ENCODE measurements at regions of chr2 and their contacts with region 1.

Region 1: GRCh38 chr2:60550178-60550983 is 3.1 kb downstream of the BCL11A start:
- DNase-seq: peak; percentile 81
- H3K4me3 ChIP-seq: peak overlapping the region; percentile 81 to 89 (median 83)
- H3K27ac ChIP-seq: peak overlapping the region; percentile 16
- H3K4me1 ChIP-seq: peaks cover 27% of the 10 kb centered on the region
- H3K27me3 ChIP-seq: peaks cover 4% of the 10 kb centered on the region
- CTCF ChIP-seq: peak; percentile 65 to 86

Region 2: DNA sequence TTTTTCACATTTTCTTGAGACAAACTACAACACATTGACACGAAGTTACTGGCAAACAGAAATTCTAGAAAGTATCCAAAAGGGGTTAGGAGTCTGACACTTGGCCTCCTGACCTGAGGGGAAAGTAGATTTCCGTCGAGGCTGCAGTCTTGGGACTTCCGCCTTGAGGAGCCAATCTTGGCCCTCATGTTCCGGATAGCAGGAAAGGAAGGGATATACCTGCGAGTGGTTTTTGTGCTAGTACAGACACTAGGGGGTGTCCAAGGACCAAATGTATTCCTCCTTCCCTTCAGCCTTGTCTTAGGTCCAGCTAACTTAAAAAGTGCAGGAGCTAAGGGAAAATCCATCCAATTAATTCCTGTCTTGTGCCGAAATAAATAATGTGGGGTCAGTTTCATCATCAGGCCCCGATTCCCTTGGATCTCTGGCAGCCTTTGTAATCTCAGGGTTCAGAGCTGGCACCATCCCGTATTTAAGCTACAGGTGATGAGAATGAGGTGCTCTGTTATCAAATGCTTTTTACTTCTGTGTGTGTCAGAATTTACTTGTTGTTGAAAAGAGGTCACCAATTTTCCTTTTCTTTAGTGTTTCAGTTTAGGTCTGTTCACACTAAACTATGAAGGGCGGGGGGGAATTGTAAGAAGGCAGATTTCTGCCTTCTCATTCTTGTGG is 1979.1 kb before region 1 on chr2:
- CTCF ChIA-PET with region 1: interaction called, 3 read pairs
- dilution Hi-C with region 1: no loop called
- in situ Hi-C with region 1: no loop called
- intact Hi-C with region 1: loop called (anchors 2 kb)
- DNase-seq: peak; percentile 69
- H3K4me3 ChIP-seq: no peak overlapping the region
- H3K27ac ChIP-seq: no peak overlapping the region
- H3K4me1 ChIP-seq: peaks cover 5% of the 10 kb centered on the region
- H3K27me3 ChIP-seq: no peaks in the 10 kb centered on the region
- CTCF ChIP-seq: peak; percentile 82 to 88

Region 3: GRCh38 chr2:58762176-58762781 is 1788.1 kb before region 1 on chr2:
- CTCF ChIA-PET with region 1: no interaction called
- dilution Hi-C with region 1: no loop called
- in situ Hi-C with region 1: no loop called
- intact Hi-C with region 1: loop called (anchors 1 kb)
- DNase-seq: peak; percentile 65
- H3K4me3 ChIP-seq: no peak overlapping the region
- H3K27ac ChIP-seq: no peak overlapping the region
- H3K4me1 ChIP-seq: no peaks in the 10 kb centered on the region
- H3K27me3 ChIP-seq: peaks cover under 1% of the 10 kb centered on the region
- CTCF ChIP-seq: peak; percentile 69 to 83

Region 4: DNA sequence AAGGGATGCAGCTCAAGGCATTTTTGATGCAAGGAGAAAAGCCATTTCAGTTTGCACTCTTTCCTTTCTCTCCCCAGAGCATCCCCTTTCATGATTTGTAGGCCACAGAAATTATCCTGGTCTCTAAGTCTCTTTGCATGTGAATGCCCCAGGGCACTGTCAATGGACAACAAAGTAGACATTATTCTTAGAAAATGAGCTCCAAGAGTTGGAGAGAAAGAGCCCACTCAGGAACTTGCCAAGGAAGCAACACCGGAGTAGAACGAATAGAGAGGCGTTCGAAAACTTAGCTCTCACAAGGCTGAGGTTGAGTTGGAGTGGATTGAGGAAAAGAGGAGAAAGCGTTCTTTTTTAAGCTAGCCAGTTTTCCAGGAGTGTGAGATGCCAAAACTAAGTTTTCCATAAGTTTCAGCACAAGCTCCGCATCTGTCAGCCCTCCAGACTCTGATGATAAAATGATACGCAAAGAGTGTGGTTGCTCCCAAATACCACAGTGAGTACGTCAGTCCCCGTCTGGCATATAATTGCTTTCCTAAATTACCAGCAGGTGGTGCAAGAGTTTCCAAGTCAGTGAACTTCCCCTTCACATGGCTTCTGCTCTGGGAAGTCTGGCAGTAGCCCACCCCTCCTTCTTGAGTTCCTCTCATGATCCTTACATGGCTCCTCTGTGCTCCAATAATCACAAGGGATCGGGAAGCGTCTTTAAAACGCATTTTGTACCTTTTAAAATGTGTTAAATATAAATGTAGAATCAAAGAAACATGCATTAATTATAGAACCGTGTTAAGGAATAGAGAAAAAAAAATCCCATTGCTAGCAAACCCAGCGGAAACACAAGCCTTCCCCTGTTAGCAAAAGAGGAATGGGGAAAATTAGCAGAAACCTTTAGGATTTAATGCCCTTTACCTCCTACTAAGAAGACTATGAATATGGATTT is 1248.6 kb before region 1 on chr2:
- CTCF ChIA-PET with region 1: no interaction called
- dilution Hi-C with region 1: no loop called
- in situ Hi-C with region 1: loop called in 1 of 2 experiments (anchors 25 kb)
- intact Hi-C with region 1: loop called (anchors 1 kb)
- DNase-seq: peak; percentile 62
- H3K4me3 ChIP-seq: no peak overlapping the region
- H3K27ac ChIP-seq: no peak overlapping the region
- H3K4me1 ChIP-seq: no peaks in the 10 kb centered on the region
- H3K27me3 ChIP-seq: no peaks in the 10 kb centered on the region
- CTCF ChIP-seq: peak; percentile 60 to 69

Region 5: DNA sequence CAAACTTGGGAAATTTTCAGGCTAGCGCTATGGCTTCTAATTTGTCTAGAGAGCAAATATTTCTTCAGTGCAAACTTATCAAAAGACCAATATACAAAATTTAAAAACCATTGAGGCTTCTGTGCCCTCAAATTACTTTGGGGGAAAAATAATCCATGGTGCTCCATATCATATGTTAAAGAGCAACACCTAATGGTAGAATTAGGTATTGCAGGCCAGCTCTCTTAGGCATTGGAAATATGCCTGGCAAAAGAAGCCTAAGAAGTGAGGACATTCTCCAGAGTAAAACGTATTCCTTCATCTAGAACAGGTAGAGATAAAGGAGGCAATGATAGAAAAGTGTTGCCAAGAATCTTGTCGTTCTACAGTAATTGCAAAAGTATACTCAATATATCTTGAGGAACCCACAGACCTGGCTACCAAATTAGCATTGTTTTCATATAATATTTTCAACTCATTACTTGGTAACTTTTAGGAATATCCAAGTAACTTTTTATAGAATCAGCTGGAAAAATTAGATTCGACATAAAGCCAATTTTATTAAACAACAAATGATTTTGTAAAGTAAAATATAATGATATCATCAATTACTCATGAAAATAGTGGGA is 398.1 kb before region 1 on chr2:
- CTCF ChIA-PET with region 1: interaction called, 8 read pairs
- dilution Hi-C with region 1: no loop called
- in situ Hi-C with region 1: no loop called
- intact Hi-C with region 1: loop called (anchors 1 kb)
- DNase-seq: peak; percentile 21
- H3K4me3 ChIP-seq: no peak overlapping the region
- H3K27ac ChIP-seq: no peak overlapping the region
- H3K4me1 ChIP-seq: no peaks in the 10 kb centered on the region
- H3K27me3 ChIP-seq: peaks cover 4% of the 10 kb centered on the region
- CTCF ChIP-seq: peak; percentile 85 to 92

Region 6: DNA sequence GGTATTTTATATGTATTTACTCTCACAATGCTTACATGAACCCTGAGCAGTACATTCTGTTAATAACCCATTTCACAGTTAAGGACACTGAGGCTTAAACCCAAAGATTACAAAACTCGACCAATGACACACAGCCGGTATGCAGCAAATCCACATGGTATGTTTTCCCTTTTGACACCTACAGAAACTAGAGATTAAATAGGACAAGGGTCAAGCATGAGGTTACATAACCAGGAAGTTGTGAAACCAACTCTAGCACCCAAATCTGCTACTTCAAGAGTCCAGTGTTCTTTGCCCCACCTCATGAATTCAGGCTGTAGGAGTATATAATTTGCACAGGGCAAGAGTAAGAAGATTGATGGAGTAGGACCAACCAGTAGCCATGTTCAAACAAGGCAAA is 246.7 kb before region 1 on chr2:
- CTCF ChIA-PET with region 1: interaction called, 13 read pairs
- dilution Hi-C with region 1: no loop called
- in situ Hi-C with region 1: no loop called
- intact Hi-C with region 1: loop called (anchors 2 kb)
- DNase-seq: no peak
- H3K4me3 ChIP-seq: no peak overlapping the region
- H3K27ac ChIP-seq: no peak overlapping the region
- H3K4me1 ChIP-seq: peaks cover 10% of the 10 kb centered on the region
- H3K27me3 ChIP-seq: no peaks in the 10 kb centered on the region
- CTCF ChIP-seq: no peak

Region 7: DNA sequence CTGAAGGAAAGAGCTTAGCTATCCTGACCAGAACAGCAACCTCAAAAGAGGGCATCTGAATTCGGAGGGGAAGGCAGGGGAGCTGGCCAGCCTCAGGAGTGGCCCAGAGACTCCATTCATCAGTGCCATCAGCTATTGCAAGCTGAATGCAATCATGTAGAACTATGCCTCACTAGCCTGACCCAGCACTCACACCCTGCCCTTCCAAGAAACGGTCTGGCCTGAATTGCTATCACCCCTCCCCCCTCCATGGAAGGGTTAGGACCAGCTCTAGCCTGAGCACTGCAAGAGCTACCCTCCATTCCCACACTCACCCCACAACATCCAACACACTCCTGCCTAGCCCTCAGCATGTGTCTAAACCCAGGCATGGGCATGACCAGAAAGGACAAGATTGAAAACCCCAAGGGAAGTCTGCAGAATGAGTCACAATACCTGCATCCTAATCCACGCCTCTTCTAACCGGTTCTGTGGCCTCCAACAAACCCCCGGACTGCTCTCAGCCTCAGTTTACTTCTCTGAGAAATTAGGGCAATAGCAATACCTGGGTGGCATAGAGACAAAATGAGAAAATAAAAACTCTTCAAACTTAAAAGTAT is 117.3 kb before region 1 on chr2:
- CTCF ChIA-PET with region 1: no interaction called
- dilution Hi-C with region 1: no loop called
- in situ Hi-C with region 1: no loop called
- intact Hi-C with region 1: no loop called
- DNase-seq: peak; percentile 58
- H3K4me3 ChIP-seq: no peak overlapping the region
- H3K27ac ChIP-seq: no peak overlapping the region
- H3K4me1 ChIP-seq: peaks cover 7% of the 10 kb centered on the region
- H3K27me3 ChIP-seq: no peaks in the 10 kb centered on the region
- CTCF ChIP-seq: no peak

Region 8: GRCh38 chr2:60498816-60499429 is 51.5 kb before region 1 on chr2:
- CTCF ChIA-PET with region 1: interaction called, 5 read pairs
- dilution Hi-C with region 1: no loop called
- in situ Hi-C with region 1: no loop called
- intact Hi-C with region 1: loop called (anchors 1 kb)
- DNase-seq: no peak
- H3K4me3 ChIP-seq: no peak overlapping the region
- H3K27ac ChIP-seq: no peak overlapping the region
- H3K4me1 ChIP-seq: peaks cover 31% of the 10 kb centered on the region
- H3K27me3 ChIP-seq: no peaks in the 10 kb centered on the region
- CTCF ChIP-seq: no peak

Region 9: DNA sequence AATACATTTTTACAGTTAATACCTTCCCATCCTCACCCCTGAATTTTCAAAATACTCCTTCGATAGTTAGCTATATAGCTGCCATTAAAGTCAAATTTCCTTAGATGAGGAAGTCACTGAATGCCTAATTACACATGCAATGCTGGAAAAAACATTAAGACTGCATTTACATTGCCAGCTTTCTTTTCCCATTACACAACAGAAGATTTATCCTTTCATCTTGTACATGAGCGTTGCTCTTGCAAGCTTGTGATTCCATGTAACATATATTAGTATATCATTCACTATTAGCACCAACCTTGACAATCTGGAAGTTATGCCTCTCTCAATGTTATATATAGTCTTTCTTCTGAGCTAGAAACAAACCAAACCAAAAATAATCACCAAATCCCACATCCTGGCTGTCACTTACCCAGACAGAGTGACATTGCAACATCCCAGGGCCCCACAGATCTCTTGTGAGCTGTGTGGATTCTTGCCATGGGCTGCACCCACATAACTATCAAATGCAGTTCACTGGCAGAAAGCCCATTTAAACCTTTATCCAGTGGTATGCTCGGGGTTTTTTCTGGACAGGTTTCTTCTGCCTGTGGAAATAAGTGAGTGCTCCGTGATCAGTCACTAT is 126.4 kb after region 1 on chr2:
- CTCF ChIA-PET with region 1: no interaction called
- dilution Hi-C with region 1: no loop called
- in situ Hi-C with region 1: no loop called
- intact Hi-C with region 1: no loop called
- DNase-seq: no peak
- H3K4me3 ChIP-seq: no peak overlapping the region
- H3K27ac ChIP-seq: no peak overlapping the region
- H3K4me1 ChIP-seq: no peaks in the 10 kb centered on the region
- H3K27me3 ChIP-seq: no peaks in the 10 kb centered on the region
- CTCF ChIP-seq: no peak

Measured in mammary epithelial cell (primary cell).